ENCODE measurements at regions of chr4 and their contacts with region 1.

Region 1: DNA sequence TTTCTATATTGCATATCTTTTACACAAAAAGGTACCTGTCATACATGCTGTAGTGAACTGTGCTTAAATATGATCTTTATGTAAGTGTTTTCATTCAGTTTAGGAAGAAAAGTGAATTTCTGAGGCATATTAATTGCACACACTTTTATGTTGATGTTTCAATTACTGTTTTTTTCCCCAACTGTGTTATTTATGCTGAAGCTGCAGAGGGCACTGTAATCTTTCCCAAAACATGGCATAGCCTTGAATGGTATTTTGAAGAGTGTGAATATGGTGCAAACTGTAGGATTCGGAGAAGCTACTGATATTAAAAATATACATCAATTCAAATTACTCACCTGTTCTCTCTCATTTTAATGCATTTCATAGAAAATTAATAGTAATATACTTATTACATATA is 6.0 kb upstream of the CENPE start:
- DNase-seq: no peak
- H3K4me3 ChIP-seq: no peak overlapping the region
- H3K27ac ChIP-seq: no peak overlapping the region
- H3K4me1 ChIP-seq: no peaks in the 10 kb centered on the region
- H3K27me3 ChIP-seq: no peaks in the 10 kb centered on the region
- CTCF ChIP-seq: peak; percentile 59

Region 2: GRCh38 chr4:103786014-103786413 is 581.9 kb after region 1 on chr4:
- CTCF ChIA-PET with region 1: no interaction called
- POLR2A ChIA-PET with region 1: no interaction called
- intact Hi-C with region 1: loop called (anchors 5 kb)
- DNase-seq: peak; percentile 2 to 35
- H3K4me3 ChIP-seq: no peak overlapping the region
- H3K27ac ChIP-seq: no peak overlapping the region
- H3K4me1 ChIP-seq: no peaks in the 10 kb centered on the region
- H3K27me3 ChIP-seq: no peaks in the 10 kb centered on the region
- CTCF ChIP-seq: peak; percentile 66

Region 3: DNA sequence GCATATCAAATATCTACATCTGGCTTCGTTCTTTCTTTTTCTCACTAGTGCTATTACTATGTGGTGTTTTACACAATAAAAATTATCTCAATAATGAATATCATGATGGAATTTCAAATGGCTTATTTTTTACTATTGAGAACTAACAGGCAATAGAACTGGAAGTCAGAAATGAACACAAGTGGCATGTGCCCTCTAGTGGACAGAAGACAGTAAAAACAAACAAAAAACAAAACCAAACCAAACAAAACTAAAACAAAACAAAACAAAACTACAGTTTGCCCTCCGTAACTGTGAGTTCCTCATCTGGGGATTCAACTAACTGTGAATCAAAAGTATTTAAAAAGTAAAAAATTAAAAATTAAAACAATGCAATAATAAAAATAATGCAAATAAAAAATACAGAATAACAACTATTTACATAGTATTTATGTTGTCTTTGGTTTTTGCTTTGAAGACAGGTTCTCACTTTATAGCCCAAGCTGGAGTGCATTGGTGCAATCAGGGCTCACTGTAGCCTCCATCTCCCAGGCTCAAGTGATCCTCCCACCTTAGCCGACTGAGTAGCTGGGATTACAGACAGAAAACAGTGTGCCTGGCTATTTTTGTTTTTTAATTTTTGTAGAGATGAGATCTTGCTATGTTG is 711.2 kb after region 1 on chr4:
- CTCF ChIA-PET with region 1: no interaction called
- POLR2A ChIA-PET with region 1: no interaction called
- intact Hi-C with region 1: loop called (anchors 2 kb)
- DNase-seq: no peak
- H3K4me3 ChIP-seq: no peak overlapping the region
- H3K27ac ChIP-seq: no peak overlapping the region
- H3K4me1 ChIP-seq: no peaks in the 10 kb centered on the region
- H3K27me3 ChIP-seq: no peaks in the 10 kb centered on the region
- CTCF ChIP-seq: peak; percentile 75

Region 4: GRCh38 chr4:103934178-103934789 is 730.2 kb after region 1 on chr4:
- CTCF ChIA-PET with region 1: no interaction called
- POLR2A ChIA-PET with region 1: no interaction called
- intact Hi-C with region 1: loop called (anchors 5 kb)
- DNase-seq: no peak
- H3K4me3 ChIP-seq: no peak overlapping the region
- H3K27ac ChIP-seq: no peak overlapping the region
- H3K4me1 ChIP-seq: no peaks in the 10 kb centered on the region
- H3K27me3 ChIP-seq: no peaks in the 10 kb centered on the region
- CTCF ChIP-seq: peak; percentile 80

Region 5: GRCh38 chr4:103996637-103997036 is 792.5 kb after region 1 on chr4:
- CTCF ChIA-PET with region 1: no interaction called
- POLR2A ChIA-PET with region 1: no interaction called
- intact Hi-C with region 1: loop called (anchors 5 kb)
- DNase-seq: peak; percentile 50
- H3K4me3 ChIP-seq: no peak overlapping the region
- H3K27ac ChIP-seq: no peak overlapping the region
- H3K4me1 ChIP-seq: no peaks in the 10 kb centered on the region
- H3K27me3 ChIP-seq: no peaks in the 10 kb centered on the region
- CTCF ChIP-seq: no peak

Measured in PC-9 (cell line).